ENCODE measurements at regions of chr5 and their contacts with region 1.

Region 1: GRCh38 chr5:97093193-97093592 is 49.2 kb downstream of the LIX1 start:
- DNase-seq: no peak
- ATAC-seq: no peak
- H3K4me3 ChIP-seq: no peak overlapping the region
- H3K27ac ChIP-seq: no peak overlapping the region
- H3K4me1 ChIP-seq: no peaks in the 10 kb centered on the region
- H3K27me3 ChIP-seq: peaks cover 9% of the 10 kb centered on the region; the same call in 1 of the 2 replicates
- CTCF ChIP-seq: no peak

Region 2: DNA sequence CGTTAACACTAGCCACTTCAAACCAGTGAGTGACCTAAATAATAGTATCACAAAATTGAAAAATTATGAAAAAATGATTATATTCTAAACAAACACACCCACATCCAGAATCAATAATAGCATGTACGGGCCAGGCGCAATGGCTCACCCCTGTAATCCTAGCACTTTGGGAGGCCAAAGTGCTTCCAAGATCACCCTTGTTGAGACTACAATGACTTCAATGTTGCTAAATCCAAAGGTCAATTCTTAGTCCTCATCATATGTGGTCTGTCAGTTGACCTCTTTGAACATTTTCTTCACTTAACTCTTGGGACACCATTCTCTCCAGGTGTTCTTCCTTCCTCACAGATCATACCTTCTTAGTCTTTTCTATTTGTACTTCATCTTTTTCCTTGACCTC is 78.5 kb after region 1 on chr5:
- CTCF ChIA-PET with region 1: no interaction called
- POLR2A ChIA-PET with region 1: interaction called, 13 read pairs
- in situ Hi-C with region 1: no loop called
- intact Hi-C with region 1: no loop called
- DNase-seq: no peak
- ATAC-seq: no peak
- H3K4me3 ChIP-seq: no peak overlapping the region
- H3K27ac ChIP-seq: no peak overlapping the region
- H3K4me1 ChIP-seq: no peaks in the 10 kb centered on the region
- H3K27me3 ChIP-seq: no peaks in the 10 kb centered on the region
- CTCF ChIP-seq: no peak

Measured in Panc1 (cell line).